Activated CD4-positive, alpha-beta T cell treated with anti-CD3 and anti-CD28 coated beads, Interleukin-2, amount 10 ng/mL, durations not matched to agents 7 days and 5 days (primary cell): ENCODE measurements at regions of chr15 and their contacts with region 1.

Region 1: DNA sequence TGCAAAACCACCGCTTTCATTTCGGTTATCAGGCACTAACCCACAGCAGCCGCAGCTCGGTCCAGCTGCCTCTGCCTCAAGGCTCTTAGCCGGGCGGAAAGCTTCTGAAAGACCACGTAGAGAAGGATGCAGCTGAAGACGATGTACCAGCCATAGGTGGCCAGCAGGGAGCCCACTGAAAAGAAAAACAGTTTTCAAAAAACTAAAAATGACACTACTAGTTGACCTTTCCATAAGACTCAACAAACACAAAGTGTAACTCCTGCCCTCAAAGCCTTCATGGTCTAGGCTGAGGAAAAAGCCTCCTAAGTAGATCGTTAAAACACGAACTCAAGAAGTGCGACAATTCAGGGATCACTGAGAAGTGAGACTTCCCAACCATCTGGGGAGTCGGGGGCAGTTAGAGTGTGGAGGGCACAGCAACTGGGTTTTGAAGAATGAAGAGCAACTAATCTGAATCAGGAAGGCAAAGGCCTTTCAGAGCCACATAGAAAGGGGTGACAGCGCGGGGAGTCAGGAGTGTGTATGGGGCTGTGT is 716 bp downstream of the SELENOS start:
- DNase-seq: peak; percentile 22
- H3K4me3 Mint-ChIP-seq: peak overlapping the region; percentile 91
- H3K27ac Mint-ChIP-seq: peak overlapping the region; percentile 93
- H3K4me1 Mint-ChIP-seq: peaks cover 29% of the 10 kb centered on the region
- H3K27me3 Mint-ChIP-seq: no peaks in the 10 kb centered on the region

Region 2: GRCh38 chr15:101288908-101289513 is 12.4 kb after region 1 on chr15:
- CTCF ChIA-PET with region 1: interaction called, 14 read pairs
- POLR2A ChIA-PET with region 1: interaction called, 3 read pairs
- DNase-seq: peak; percentile 58
- H3K4me3 Mint-ChIP-seq: no peak overlapping the region
- H3K27ac Mint-ChIP-seq: peak overlapping the region; percentile 58
- H3K4me1 Mint-ChIP-seq: peaks cover 54% of the 10 kb centered on the region
- H3K27me3 Mint-ChIP-seq: no peaks in the 10 kb centered on the region

Region 3: GRCh38 chr15:101294731-101295606 is 18.4 kb after region 1 on chr15 and contains the start of gene SNRPA1:
- CTCF ChIA-PET with region 1: interaction called, 14 read pairs
- POLR2A ChIA-PET with region 1: interaction called, 3 read pairs
- DNase-seq: peak; percentile 96
- H3K4me3 Mint-ChIP-seq: peak within 1 kb of the TSS; percentile 99
- H3K27ac Mint-ChIP-seq: peak within 1 kb of the TSS; percentile 95
- H3K4me1 Mint-ChIP-seq: peaks cover 43% of the 10 kb centered on the region
- H3K27me3 Mint-ChIP-seq: no peaks in the 10 kb centered on the region
- total RNA-seq, gene SNRPA1: 92.8 to 109 TPM